Aorta (tissue), 5 donors: ENCODE measurements at regions of chr14 and their contacts with region 1.

Region 1: DNA sequence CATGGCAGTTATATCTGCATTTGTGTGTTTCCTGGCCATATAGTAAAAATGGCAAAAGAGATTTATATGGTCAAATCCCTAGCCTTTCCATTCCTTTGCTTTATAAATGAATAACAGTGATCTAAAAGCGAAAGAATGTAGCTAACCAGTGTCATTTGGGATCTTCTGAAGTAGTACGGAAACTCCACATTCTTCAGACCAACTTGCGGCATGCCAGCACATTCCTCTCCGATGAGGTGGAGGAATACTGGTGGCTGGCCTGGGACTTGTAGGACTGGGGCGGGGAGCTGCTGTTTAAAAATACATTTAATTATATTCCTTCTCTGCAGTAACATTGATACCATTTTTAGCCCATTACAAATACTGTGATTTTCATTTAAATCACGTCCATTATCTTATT is 85.3 kb downstream of the SAMD4A start:
- DNase-seq: peak; percentile 90 to 93
- ATAC-seq: peak; percentile 92
- H3K4me3 ChIP-seq: peak overlapping the region in 1 of 2 donors; percentile 19
- H3K27ac ChIP-seq: peak overlapping the region; percentile 53 to 99
- H3K4me1 ChIP-seq: peaks cover 5 to 12% of the 10 kb centered on the region in 2 donors
- H3K27me3 ChIP-seq: no peaks in the 10 kb centered on the region

Region 2: DNA sequence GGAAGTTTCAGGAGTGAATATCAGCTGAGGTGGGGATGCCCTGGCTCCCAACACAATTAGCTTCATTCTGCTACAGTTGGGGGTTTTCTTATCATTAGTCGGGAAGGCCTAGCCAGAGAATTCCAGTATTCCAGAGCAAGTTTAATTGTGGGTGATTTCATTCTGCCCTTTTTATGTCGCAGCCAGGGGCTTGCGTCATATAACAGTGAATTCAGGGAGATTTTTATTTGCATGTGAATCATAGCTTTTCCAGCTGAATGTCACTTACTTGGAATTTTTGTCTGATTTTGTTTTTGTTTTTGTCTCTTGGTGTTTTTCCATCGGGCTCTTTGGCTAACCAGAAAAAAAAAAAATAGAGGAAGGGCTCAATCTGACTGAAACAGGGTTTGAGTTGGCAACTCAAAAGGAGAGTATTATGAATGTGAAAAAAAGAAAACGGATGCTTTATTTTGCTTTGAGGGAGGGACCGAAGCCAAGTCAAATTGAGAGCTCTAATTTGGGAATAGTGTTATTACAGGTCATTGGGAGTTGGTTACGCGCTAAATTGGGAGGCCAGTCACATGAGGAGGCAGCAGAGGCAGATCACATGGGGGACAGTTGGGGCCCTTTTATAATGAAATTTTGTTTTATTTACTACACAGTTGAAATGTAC is 34.2 kb after region 1 on chr14:
- intact Hi-C with region 1: loop called (anchors 2 to 5 kb)
- DNase-seq: peak; percentile 69 to 82
- ATAC-seq: peak; percentile 86
- H3K4me3 ChIP-seq: no peak overlapping the region
- H3K27ac ChIP-seq: peak overlapping the region; percentile 97 to 100
- H3K4me1 ChIP-seq: peaks cover 8 to 19% of the 10 kb centered on the region in 2 donors
- H3K27me3 ChIP-seq: no peaks in the 10 kb centered on the region